ENCODE measurements at regions of chr14 and their contacts with region 1.

Region 1: DNA sequence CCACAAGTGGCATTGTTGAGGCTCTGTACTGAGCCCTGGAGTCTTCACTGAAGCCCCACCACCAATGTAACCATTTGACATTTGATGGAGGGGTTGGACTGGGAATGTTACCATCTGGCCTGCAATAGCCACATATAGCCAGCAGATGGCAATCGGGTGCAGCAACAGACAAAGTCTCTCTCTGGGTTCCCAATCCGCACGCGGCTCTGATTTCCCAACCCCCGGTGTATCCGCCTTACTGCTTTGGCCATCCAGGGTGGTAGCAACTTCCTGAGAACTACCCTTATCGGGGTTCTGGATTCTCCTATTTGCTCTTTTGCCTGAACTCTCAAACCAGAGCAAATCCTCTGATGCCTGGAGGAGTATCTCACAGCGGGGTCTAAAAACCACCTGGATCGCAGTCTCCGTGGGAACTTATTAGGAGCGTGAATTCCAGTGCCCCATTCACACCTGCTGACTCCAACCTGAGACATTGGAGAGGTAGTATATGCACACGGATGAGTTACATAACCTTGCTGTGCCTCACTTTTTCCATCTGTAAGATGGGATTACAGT is 14.2 kb downstream of the VRTN start:
- DNase-seq: peak; percentile 62 to 84 (median 77)
- H3K4me3 ChIP-seq: no peak overlapping the region
- H3K27ac ChIP-seq: no peak overlapping the region
- H3K27me3 ChIP-seq: peaks cover 0 to 5% (median 0%) of the 10 kb centered on the region in 45 donors
- CTCF ChIP-seq: peak; percentile 85 to 99 (median 94)

Region 2: GRCh38 chr14:74478996-74479635 is 116.7 kb after region 1 on chr14:
- intact Hi-C with region 1: loop called (anchors 1 to 5 kb)
- DNase-seq: no peak
- H3K4me3 ChIP-seq: no peak overlapping the region
- H3K27ac ChIP-seq: no peak overlapping the region
- H3K27me3 ChIP-seq: no peaks in the 10 kb centered on the region
- CTCF ChIP-seq: peak; percentile 27 to 85 (median 73)

Region 3: GRCh38 chr14:74493343-74494261 is 131.2 kb after region 1 on chr14 and contains the start of gene ISCA2:
- intact Hi-C with region 1: loop called (anchors 5 kb)
- DNase-seq: peak; percentile 96 to 100 (median 98)
- H3K4me3 ChIP-seq: peak within 1 kb of the TSS; percentile 74 to 100 (median 94)
- H3K27ac ChIP-seq: peak within 1 kb of the TSS; percentile 61 to 96 (median 87)
- H3K27me3 ChIP-seq: no peaks in the 10 kb centered on the region
- CTCF ChIP-seq: peak in 25 of 56 donors; percentile 4 to 47 (median 18)
- total RNA-seq, gene ISCA2: 16.2 to 34.8 (median 23.3) TPM

Measured in dorsolateral prefrontal cortex (tissue), 120 donors.